ENCODE measurements at regions of chr6 and their contacts with region 1.

Region 1: DNA sequence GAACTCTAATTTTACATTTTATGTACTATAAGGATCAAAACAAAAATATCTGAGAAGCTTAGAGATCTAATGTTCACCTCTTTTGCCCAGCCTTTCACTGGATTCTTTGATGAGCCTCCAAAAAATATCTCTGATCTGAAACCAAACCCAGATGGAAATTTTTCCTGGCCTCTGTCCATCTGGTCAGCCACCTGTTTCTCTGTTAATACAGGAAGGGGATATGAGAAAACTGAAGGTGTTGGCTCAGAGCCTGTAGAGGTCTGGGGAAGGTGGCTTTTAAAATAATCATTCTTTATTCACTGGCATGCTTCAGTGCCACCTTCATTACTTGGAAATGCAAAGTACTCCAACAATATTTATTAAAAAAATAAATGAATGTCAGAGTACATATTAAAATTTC is 8.5 kb upstream of the MCM3 start:
- DNase-seq: no peak
- CTCF ChIP-seq: no peak

Region 2: DNA sequence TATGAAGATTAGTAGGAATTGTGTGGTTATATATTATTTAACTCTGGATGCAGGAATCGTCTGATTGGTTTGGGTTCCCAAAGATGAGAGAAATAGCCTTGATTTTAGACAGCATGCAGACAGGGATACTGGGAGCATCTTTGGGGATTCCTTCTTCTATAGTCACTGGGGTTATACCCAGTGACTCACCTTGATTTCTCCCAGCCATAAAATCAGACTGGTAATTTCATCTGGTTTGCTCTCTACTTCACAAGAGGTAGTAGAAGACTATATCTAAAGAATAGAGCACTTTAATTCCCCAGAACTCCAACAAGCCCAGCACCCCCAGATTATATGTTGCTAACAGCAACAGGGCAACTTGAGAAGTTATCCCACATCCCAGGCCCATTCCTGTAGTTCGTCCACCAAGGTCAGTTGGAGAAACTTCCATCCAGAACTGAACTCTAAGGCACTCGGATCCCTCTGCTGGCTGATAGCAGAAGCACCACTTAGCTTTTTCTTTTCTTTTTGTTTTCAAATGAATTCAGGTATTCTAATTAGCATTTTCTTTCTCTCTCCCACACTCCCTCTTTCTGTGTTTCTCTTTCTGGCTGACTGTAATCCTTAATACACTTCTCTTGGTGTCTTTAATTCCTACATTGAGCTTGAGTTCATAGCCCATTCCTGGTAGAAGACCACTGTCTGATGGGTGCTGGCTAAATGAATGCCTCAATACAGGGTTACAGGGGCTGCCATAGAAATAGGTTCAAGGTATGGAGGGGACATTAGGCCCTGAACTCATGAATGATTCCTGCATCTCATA is 106.6 kb after region 1 on chr6:
- CTCF ChIA-PET with region 1: interaction called, 195 read pairs
- POLR2A ChIA-PET with region 1: no interaction called
- DNase-seq: peak; percentile 33
- CTCF ChIP-seq: peak; percentile 77

Region 3: GRCh38 chr6:52426680-52427079 is 133.6 kb after region 1 on chr6:
- CTCF ChIA-PET with region 1: no interaction called
- POLR2A ChIA-PET with region 1: no interaction called
- DNase-seq: no peak
- CTCF ChIP-seq: no peak

Measured in GM10248 (cell line).